ENCODE measurements at regions of chr22 and their contacts with region 1.

Region 1: DNA sequence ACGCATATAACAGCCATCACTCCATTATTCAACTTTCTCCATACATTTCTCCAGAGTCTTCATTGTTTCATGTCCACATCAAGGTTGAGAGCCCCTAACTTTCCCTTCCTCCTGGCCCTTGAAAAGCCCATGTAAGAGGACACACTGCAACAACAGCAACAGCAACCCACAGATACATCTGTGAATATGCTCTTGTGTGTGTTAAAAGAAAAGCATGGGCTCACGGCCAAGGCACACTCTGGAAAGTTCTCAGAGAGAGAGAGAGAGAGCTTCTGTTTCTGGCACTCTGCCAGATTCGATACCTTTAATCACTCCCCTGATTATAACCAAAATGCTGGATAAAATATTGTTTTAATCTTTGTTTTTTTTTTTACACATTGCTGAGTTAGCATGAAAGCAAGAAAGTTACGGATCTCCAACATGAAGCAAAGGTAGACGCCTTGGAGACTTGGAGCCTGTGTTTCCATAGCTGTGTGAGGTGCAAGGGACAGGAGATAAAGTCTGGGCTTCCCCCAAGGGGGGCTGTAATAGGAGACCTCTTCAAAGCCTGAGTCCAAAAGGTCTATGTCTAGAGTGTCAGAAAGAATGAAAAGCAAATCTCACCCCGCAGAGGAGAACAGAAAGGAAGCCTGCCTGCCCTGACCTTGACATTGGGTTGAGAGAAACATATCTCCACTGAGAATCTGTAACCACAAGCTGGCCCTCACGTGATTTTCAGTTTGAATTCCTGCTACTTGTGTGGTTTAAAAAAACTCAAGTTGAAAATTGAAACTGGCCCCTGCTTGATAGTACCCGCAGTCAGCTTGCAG is 33.7 kb upstream of the MPPED1 start:
- DNase-seq: no peak
- CTCF ChIP-seq: no peak

Region 2: DNA sequence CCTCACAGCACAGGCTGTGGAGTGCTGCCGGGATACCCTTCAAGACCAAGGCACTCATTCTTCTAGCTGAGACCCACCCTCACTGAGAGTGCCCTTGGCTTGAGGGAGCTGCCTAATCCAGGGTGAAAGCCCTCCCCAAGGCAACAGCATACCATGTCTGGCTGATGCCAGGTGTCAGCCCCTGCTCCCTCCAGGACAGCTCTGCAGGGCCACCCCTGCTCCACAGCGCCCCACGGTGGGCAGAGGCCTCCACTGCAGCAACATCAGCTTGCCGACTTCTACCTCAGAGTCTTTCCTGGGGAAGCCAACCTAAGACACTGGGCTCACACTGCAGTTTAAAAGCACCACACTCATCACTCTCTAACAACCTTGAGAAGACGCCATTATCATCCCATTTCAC is 317.9 kb before region 1 on chr22:
- CTCF ChIA-PET with region 1: no interaction called
- POLR2A ChIA-PET with region 1: no interaction called
- DNase-seq: peak; percentile 52
- CTCF ChIP-seq: peak; percentile 49

Region 3: DNA sequence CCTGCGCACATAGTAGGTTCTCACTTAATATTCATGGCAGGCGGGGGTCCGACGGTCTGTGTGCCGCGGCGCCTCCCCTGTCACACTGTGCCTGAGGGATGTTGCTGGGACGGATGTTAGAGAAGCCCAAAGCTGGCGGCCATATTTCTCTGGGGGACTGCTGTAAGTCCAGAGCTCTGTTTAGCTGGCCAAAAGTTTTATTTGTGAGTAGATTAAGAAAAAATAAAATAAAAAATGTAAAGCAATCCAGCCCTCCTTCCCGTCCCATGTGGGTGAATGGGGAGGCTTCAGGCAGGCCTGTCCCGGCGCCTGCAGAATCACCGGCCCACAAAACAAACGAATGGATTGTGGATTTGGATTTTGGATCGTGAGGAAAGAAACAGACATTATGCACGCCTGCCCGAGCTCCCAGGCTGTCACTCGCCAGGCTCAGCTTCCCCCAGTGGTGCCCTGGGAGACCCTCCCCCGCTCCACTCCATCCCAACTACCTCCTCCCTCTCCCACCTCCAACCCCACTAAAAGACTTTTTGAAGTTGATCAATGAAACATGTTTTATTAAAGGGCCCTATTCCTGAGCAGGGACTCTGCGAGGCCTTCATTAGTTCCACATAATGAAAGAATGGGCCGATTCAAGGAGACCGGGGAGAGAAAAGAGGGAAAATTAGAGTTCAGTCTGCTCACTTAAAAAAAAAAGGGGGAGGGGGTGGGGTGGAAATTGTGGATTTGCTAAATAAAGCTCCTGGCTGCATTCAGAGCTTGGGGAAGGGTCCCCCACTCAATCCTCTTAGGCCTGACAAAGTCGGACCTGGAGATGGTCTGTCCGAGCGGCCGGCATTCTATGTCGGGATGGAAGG is 14.6 kb before region 1 on chr22:
- CTCF ChIA-PET with region 1: interaction called, 10 read pairs
- POLR2A ChIA-PET with region 1: no interaction called
- DNase-seq: no peak
- CTCF ChIP-seq: no peak